Activated B cell treated with CpG ODN at 0.5 μM for 24 hours (primary cell): ENCODE measurements at regions of chr10 and their contacts with region 1.

Region 1: GRCh38 chr10:92699518-92700381 is 10.0 kb downstream of the HHEX start:
- DNase-seq: peak; percentile 46
- ATAC-seq: peak; percentile 64
- H3K4me3 Mint-ChIP-seq: peak overlapping the region; percentile 88
- H3K27ac Mint-ChIP-seq: peak overlapping the region; percentile 85
- H3K4me1 Mint-ChIP-seq: peaks cover 72% of the 10 kb centered on the region
- H3K27me3 Mint-ChIP-seq: no peaks in the 10 kb centered on the region
- CTCF ChIP-seq: no peak

Region 2: DNA sequence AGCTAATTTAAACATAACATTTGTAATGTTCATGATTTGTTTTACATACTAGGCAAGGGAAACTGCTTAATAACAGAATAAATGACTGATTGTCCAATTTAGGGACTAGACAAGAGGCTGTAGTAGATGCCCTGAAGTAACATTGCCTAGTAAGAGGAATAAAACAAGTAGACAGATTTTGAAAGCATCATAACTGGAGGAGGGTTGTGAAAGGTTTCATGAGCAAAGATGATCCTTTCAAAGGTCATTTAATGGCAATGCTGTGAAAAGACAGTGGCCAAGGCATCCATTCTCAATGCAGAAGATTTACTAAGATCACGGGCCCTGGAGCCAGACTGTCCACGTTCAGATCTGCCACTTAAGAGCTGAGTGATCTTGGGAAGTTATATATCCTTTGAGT is 54.8 kb before region 1 on chr10:
- CTCF ChIA-PET with region 1: no interaction called
- POLR2A ChIA-PET with region 1: no interaction called
- intact Hi-C with region 1: no loop called
- DNase-seq: no peak
- ATAC-seq: no peak
- H3K4me3 Mint-ChIP-seq: no peak overlapping the region
- H3K27ac Mint-ChIP-seq: no peak overlapping the region
- H3K4me1 Mint-ChIP-seq: peaks cover 5% of the 10 kb centered on the region
- H3K27me3 Mint-ChIP-seq: no peaks in the 10 kb centered on the region
- CTCF ChIP-seq: no peak

Region 3: DNA sequence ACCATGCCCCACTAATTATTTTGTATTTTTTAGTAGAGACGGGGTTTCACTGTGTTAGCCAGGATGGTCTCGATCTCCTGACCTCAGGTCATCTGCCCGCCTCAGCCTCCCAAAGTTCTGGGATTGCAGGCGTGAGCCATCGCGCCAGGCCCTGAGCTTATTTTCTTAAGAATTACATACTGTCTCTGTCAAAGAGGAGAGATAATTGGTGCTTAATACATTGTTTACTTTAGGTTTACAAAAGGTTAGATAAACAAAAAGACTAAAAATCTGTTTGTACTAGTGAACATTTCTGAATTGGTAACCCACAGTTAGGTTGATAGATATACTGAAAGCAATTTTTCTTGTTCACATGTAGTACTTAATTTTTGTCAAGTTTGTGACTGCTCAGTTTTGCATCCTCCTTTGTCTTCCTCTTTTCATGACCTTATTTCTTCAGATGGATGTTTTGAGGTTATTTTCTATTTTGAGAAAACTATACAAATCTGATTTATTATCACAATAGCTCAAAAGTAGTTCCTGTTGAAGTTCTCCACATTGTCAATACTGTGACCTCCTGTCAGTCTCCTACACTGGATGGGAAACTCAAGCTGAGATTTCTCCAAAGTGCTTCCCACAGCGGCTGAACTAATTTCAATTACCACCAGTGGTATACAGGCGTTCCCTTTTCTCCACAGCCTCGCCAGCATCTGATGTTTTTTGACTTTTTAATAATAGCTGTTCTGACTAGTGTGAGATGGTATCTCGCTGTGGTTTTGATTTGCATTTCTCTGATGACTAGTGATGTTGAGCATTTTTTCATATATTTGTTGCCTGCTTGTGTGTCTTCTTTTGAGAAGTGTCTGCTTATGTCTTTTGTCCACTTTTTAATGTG is 12.5 kb after region 1 on chr10:
- CTCF ChIA-PET with region 1: no interaction called
- POLR2A ChIA-PET with region 1: interaction called, 17 read pairs
- intact Hi-C with region 1: loop called (anchors 1 kb)
- DNase-seq: no peak
- ATAC-seq: peak; percentile 74
- H3K4me3 Mint-ChIP-seq: peak overlapping the region; percentile 60
- H3K27ac Mint-ChIP-seq: peak overlapping the region; percentile 85
- H3K4me1 Mint-ChIP-seq: peaks cover 65% of the 10 kb centered on the region
- H3K27me3 Mint-ChIP-seq: no peaks in the 10 kb centered on the region
- CTCF ChIP-seq: no peak

Region 4: GRCh38 chr10:92747600-92747999 is 47.9 kb after region 1 on chr10:
- CTCF ChIA-PET with region 1: interaction called, 3 read pairs
- POLR2A ChIA-PET with region 1: interaction called, 105 read pairs
- intact Hi-C with region 1: loop called (anchors 1 kb)
- DNase-seq: no peak
- ATAC-seq: peak; percentile 86
- H3K4me3 Mint-ChIP-seq: no peak overlapping the region
- H3K27ac Mint-ChIP-seq: peak overlapping the region; percentile 81
- H3K4me1 Mint-ChIP-seq: peaks cover 74% of the 10 kb centered on the region
- H3K27me3 Mint-ChIP-seq: no peaks in the 10 kb centered on the region
- CTCF ChIP-seq: no peak